ENCODE measurements at regions of chr22 and their contacts with region 1.

Region 1: DNA sequence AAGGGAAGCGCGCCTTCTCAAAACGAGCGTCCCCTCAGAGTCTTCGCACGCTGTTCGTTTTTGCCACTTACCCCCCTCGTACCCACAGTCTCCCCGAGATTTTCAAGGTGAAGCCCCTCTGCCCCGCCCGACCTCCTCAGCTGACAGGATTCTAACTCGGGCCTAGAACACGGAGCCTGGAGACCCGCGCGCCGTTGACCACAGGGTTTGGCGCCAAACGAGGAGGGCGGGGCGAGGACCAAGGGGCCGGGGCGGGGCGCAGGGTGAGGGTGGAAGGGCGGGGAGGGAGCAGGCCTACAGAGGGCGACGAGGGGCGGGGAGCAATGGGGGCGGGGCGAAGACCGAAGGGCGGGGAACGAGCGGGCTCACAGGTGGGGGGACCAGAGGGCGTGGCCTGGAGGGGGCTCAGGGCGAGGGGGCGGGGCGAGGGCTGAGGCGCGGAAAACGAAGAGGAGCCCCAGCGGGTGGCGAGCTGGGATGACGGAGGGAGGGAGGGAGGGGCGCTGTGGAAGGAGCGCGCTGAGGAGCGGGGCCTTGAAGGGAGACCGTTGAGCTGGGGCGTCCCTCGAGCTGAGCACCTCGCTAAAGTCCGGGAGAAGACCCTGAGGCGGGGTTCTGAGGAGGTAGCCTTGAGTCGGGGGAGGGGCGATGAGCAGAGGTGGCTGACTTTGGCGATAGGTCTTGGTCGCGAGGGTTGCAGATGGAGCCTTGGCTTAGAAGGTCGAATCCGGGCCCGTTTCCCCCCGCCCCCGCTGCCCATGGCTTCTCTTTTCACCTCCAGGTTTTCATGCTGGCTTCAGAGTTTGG is at the start of gene DMC1:
- DNase-seq: peak; percentile 93 to 100 (median 97)
- ATAC-seq: peak; percentile 92
- H3K4me3 ChIP-seq: peak within 1 kb of the TSS; percentile 89
- H3K4me3 Mint-ChIP-seq: peak within 1 kb of the TSS; percentile 90
- H3K27ac ChIP-seq: peak within 1 kb of the TSS in 1 of 2 donors; percentile 44
- H3K27ac Mint-ChIP-seq: peak within 1 kb of the TSS; percentile 80
- H3K4me1 ChIP-seq: peaks cover 20% of the 10 kb centered on the region
- H3K4me1 Mint-ChIP-seq: peaks cover 17% of the 10 kb centered on the region
- H3K27me3 ChIP-seq: no peaks in the 10 kb centered on the region
- H3K27me3 Mint-ChIP-seq: no peaks in the 10 kb centered on the region
- CTCF ChIP-seq: no peak
- total RNA-seq, gene DMC1: 0.52 to 0.95 TPM

Region 2: DNA sequence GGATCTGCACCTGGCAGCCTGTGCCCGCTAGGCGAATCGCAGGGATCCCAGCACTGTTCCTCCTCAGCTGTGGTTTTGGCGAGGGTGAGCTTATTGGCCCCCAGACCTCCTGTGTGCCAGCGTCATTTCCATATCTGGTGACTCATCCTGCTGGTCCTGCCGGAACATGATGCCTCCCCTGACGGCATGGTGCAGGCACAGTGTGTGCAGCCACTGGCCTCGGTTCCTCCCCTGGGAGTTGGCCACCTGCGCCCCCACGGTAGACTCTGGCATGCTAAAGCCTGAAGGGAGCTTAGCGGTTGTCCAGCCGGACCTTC is 570.3 kb before region 1 on chr22:
- CTCF ChIA-PET with region 1: no interaction called
- POLR2A ChIA-PET with region 1: no interaction called
- intact Hi-C with region 1: no loop called
- DNase-seq: peak in 1 of 14 experiments; percentile 30
- ATAC-seq: no peak
- H3K4me3 ChIP-seq: no peak overlapping the region
- H3K4me3 Mint-ChIP-seq: no peak overlapping the region
- H3K27ac ChIP-seq: no peak overlapping the region
- H3K27ac Mint-ChIP-seq: no peak overlapping the region
- H3K4me1 ChIP-seq: peaks cover 3% of the 10 kb centered on the region
- H3K4me1 Mint-ChIP-seq: no peaks in the 10 kb centered on the region
- H3K27me3 ChIP-seq: no peaks in the 10 kb centered on the region
- H3K27me3 Mint-ChIP-seq: no peaks in the 10 kb centered on the region
- CTCF ChIP-seq: no peak

Region 3: DNA sequence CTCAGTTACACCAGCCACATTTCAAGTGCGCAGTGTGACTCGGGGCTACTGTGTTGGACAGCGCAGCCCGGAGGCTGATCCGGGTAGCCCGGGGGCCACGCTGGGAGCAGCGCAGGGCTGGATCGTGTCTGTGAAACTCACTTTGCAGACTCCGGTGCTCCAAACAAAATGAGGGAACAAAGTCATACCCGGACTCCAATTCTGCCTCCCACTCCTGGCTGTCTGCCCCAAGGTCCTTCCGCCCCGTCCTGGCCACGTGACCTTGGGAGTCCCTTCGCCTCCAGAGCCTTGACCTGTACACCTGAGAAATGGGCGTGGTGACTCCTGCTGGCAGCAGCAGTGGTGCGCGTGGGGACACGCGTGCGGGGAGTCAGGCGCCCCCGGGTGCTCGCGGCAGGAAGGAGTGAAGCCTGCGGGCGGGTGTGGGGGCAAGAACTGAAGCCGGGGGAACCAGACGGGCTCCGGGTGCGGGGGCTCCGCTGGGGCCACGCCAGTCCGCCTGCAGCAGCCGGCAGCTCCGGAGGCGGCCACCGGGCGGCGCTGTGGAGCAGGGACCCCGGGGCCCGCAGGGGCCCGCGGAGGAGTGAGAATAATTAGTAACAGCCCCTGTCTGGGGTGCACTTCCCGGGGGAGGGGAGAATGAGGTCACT is 157.6 kb before region 1 on chr22:
- CTCF ChIA-PET with region 1: interaction called, 9 read pairs
- POLR2A ChIA-PET with region 1: no interaction called
- intact Hi-C with region 1: loop called in 1 of 2 experiments (anchors 2 kb)
- DNase-seq: peak in 11 of 14 experiments; percentile 14 to 61 (median 37)
- ATAC-seq: peak; percentile 84
- H3K4me3 ChIP-seq: no peak overlapping the region
- H3K4me3 Mint-ChIP-seq: no peak overlapping the region
- H3K27ac ChIP-seq: no peak overlapping the region
- H3K27ac Mint-ChIP-seq: no peak overlapping the region
- H3K4me1 ChIP-seq: peaks cover 10% of the 10 kb centered on the region
- H3K4me1 Mint-ChIP-seq: no peaks in the 10 kb centered on the region
- H3K27me3 ChIP-seq: no peaks in the 10 kb centered on the region
- H3K27me3 Mint-ChIP-seq: peaks cover 6% of the 10 kb centered on the region
- CTCF ChIP-seq: peak; percentile 66

Region 4: DNA sequence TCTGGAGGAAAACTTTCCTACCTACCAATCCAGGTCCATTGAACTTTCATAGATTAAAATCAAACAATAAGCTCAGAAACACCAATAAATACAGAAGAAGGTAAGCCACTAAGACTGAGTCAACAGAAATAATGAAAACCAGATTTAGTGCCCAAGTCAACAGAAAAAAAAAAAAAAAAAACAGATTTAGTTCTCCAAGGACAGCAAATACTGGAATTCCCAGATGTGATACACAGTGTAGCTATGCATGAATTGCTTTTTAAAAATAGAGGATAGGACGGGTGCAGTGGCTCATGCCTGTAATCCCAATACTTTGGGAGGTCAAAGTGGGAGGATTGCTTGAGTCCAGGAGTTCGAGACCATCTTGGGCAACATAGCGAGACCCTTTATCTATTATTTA is 15.9 kb before region 1 on chr22:
- CTCF ChIA-PET with region 1: no interaction called
- POLR2A ChIA-PET with region 1: no interaction called
- intact Hi-C with region 1: no loop called
- DNase-seq: no peak
- ATAC-seq: no peak
- H3K4me3 ChIP-seq: no peak overlapping the region
- H3K4me3 Mint-ChIP-seq: no peak overlapping the region
- H3K27ac ChIP-seq: no peak overlapping the region
- H3K27ac Mint-ChIP-seq: no peak overlapping the region
- H3K4me1 ChIP-seq: no peaks in the 10 kb centered on the region
- H3K4me1 Mint-ChIP-seq: no peaks in the 10 kb centered on the region
- H3K27me3 ChIP-seq: no peaks in the 10 kb centered on the region
- H3K27me3 Mint-ChIP-seq: no peaks in the 10 kb centered on the region
- CTCF ChIP-seq: no peak

Region 5: GRCh38 chr22:38645430-38645829 is 75.3 kb after region 1 on chr22:
- CTCF ChIA-PET with region 1: no interaction called
- POLR2A ChIA-PET with region 1: no interaction called
- intact Hi-C with region 1: no loop called
- DNase-seq: no peak
- ATAC-seq: no peak
- H3K4me3 ChIP-seq: no peak overlapping the region
- H3K4me3 Mint-ChIP-seq: no peak overlapping the region
- H3K27ac ChIP-seq: no peak overlapping the region
- H3K27ac Mint-ChIP-seq: no peak overlapping the region
- H3K4me1 ChIP-seq: no peaks in the 10 kb centered on the region
- H3K4me1 Mint-ChIP-seq: no peaks in the 10 kb centered on the region
- H3K27me3 ChIP-seq: peaks cover 0 to 3% of the 10 kb centered on the region in 2 experiments
- H3K27me3 Mint-ChIP-seq: peaks cover 12% of the 10 kb centered on the region
- CTCF ChIP-seq: no peak

Region 6: DNA sequence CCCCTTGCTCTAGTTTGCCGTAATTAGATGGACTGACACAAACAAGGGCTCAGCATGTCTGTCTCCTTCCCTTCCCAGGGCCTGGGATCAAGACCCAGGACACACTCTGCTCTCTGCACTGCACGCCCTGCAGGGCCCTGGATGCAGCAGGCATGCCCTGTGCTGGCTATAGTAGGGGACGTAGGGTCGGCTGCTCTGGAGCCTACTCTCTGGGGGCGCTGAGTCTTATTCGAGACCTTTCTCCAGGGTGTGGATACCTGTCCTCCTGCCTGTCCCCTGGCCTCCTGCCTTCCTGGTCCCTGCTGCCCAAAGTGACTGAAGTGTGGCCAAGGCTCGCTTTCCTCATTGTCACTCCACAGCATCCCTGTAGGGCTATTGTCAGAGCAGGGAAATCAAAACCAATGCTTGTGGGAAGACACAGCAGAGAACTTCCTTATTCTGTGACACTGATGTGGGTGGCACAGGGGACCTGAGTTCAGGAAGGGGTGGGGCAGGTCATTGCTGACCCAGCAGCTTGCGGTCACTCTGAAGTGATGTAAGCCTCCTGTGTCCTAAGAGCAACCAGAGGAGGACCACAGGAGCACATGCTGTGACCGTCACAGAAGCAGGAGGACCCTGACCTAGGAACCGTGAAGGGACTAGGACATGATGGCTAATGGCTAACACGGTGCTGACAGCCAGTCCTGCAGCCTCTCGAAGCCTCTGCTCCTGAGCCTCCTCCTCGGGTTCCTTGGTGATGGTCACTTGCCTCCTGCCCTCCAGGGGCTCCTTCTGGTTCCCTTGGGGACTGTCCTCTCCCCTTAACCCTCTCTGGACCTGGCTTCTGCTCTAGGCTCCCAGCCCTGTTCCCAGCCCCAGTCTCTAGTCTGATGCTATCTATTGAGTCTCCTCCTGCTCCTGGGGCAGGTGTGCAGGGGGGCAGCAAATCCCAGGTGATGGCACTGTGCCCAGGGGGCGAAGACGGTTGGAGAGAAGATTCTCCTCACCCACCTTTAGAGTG is 397.6 kb after region 1 on chr22:
- CTCF ChIA-PET with region 1: no interaction called
- POLR2A ChIA-PET with region 1: no interaction called
- intact Hi-C with region 1: no loop called
- DNase-seq: peak in 3 of 14 experiments; percentile 34 to 81 (median 66)
- ATAC-seq: no peak
- H3K4me3 ChIP-seq: no peak overlapping the region
- H3K4me3 Mint-ChIP-seq: no peak overlapping the region
- H3K27ac ChIP-seq: no peak overlapping the region
- H3K27ac Mint-ChIP-seq: no peak overlapping the region
- H3K4me1 ChIP-seq: peaks cover 31% of the 10 kb centered on the region
- H3K4me1 Mint-ChIP-seq: no peaks in the 10 kb centered on the region
- H3K27me3 ChIP-seq: no peaks in the 10 kb centered on the region
- H3K27me3 Mint-ChIP-seq: peaks cover 18% of the 10 kb centered on the region
- CTCF ChIP-seq: no peak